Activated T-helper 1 cell treated with anti-CD3 and anti-CD28 coated beads, Interleukin-12 subunit alpha, Interleukin-12 subunit beta, Interleukin-2, Interleukin-4 antibody, amounts not matched to agents 30 ng/mL and 10 ng/mL and 1 ng/mL, durations not matched to agents 14 hours and 24 hours and 36 hours (primary cell): ENCODE measurements at regions of chr7 and their contacts with region 1.

Region 1: DNA sequence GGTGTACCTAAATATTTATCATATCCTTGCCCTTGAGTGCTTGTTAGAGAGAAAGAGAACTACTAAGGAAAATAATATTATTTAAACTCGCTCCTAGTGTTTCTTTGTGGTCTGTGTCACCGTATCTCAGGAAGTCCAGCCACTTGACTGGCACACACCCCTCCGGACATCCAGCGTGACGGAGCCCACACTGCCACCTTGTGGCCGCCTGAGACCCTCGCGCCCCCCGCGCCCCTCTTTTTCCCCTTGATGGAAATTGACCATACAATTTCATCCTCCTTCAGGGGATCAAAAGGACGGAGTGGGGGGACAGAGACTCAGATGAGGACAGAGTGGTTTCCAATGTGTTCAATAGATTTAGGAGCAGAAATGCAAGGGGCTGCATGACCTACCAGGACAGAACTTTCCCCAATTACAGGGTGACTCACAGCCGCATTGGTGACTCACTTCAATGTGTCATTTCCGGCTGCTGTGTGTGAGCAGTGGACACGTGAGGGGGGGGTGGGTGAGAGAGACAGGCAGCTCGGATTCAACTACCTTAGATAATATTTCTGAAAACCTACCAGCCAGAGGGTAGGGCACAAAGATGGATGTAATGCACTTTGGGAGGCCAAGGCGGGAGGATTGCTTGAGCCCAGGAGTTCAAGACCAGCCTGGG is 11.4 kb downstream of the SERPINE1 start:
- DNase-seq: peak; percentile 64
- H3K4me3 Mint-ChIP-seq: peak overlapping the region; percentile 67
- H3K27ac Mint-ChIP-seq: peak overlapping the region; percentile 79
- H3K4me1 Mint-ChIP-seq: peaks cover 57% of the 10 kb centered on the region
- H3K27me3 Mint-ChIP-seq: peaks cover 28% of the 10 kb centered on the region

Region 2: GRCh38 chr7:100789055-100789454 is 349.3 kb before region 1 on chr7:
- intact Hi-C with region 1: no loop called
- DNase-seq: no peak
- H3K4me3 Mint-ChIP-seq: no peak overlapping the region
- H3K27ac Mint-ChIP-seq: no peak overlapping the region
- H3K4me1 Mint-ChIP-seq: no peaks in the 10 kb centered on the region
- H3K27me3 Mint-ChIP-seq: peaks cover 3% of the 10 kb centered on the region

Region 3: GRCh38 chr7:101085162-101085987 is 53.0 kb before region 1 on chr7 and contains the start of gene TRIM56:
- intact Hi-C with region 1: loop called (anchors 1 kb)
- DNase-seq: peak; percentile 76
- H3K4me3 Mint-ChIP-seq: peak within 1 kb of the TSS; percentile 98
- H3K27ac Mint-ChIP-seq: peak within 1 kb of the TSS; percentile 98
- H3K4me1 Mint-ChIP-seq: peaks cover 31% of the 10 kb centered on the region
- H3K27me3 Mint-ChIP-seq: no peaks in the 10 kb centered on the region
- total RNA-seq, gene TRIM56: 41.2 and 45.7 TPM in 2 replicates

Region 4: GRCh38 chr7:101121991-101122932 is 16.1 kb before region 1 on chr7:
- intact Hi-C with region 1: loop called (anchors 2 kb)
- DNase-seq: no peak
- H3K4me3 Mint-ChIP-seq: peak overlapping the region; percentile 58
- H3K27ac Mint-ChIP-seq: peak overlapping the region; percentile 50
- H3K4me1 Mint-ChIP-seq: peaks cover 41% of the 10 kb centered on the region
- H3K27me3 Mint-ChIP-seq: peaks cover 41% of the 10 kb centered on the region

Region 5: DNA sequence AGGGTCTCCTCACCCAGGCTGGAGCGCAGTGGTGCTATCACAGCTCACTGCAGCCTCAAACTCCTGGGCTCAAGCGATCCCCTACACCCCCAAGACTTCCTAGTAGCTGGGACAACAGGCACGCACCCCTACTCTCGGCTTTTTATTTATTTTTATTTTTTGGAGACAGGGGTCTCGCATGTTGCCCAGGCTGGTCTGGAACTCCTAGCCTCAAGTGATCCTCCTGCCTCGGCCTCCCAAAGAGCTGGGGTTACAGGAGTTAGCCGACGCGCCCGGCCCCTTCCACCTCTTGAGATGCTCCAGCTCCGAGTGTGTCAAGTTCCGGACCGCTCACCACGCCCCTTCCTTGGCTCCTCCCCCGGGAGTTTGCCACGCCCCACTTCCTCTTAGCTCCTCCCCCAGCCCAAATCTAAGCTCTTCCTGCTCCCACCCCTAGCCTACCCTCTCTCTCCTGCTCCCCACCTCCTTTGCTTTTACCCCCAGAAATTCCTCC is 35.5 kb after region 1 on chr7:
- intact Hi-C with region 1: no loop called
- DNase-seq: peak; percentile 69
- H3K4me3 Mint-ChIP-seq: peak overlapping the region; percentile 65
- H3K27ac Mint-ChIP-seq: no peak overlapping the region
- H3K4me1 Mint-ChIP-seq: peaks cover 40% of the 10 kb centered on the region
- H3K27me3 Mint-ChIP-seq: peaks cover 85% of the 10 kb centered on the region